HepG2 (cell line): ENCODE measurements at regions of chrX and their contacts with region 1.

Region 1: DNA sequence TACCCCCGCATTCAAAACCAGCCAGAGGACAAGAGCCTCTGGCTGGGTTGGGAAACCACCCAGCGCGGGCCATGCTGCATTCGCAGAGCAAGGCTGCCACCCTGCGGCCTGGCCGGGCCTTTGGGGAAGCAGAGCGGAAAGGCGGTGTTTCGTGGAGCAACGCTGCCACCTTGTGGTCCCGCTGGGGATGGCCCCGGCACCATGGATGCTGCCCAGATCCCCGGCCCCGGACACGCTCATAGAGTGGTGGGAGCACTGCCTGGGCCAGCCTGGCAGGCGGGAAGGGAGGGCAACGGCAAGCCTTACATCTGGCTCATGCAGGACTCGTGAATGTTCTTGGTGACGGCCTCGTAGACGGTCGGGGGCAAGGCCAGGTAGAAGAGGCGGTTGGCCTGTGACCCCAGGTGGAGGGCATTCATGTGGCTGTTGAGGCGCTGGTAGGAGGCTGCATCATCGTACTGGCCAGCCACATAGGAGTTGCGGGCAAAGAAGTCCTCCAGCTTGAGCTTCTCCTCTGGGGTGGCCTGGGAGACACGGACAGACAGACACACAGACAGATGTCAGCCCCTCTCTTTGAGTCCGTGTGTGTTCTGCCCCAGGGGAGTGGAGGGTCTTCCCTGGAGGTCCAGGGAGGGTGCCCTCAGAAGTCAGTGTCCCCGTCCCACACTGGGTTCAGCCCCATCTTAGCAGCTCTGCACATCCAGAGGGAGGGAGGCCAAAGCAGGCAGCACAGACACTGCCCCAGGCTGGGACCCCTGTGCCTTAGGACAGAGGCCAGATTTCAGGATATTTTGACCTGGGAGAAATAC is 11.6 kb downstream of the G6PD start:
- DNase-seq: peak; percentile 56
- ATAC-seq: peak; percentile 83
- H3K4me3 ChIP-seq: no peak overlapping the region
- H3K27ac ChIP-seq: no peak overlapping the region
- H3K4me1 ChIP-seq: peaks cover 28% of the 10 kb centered on the region
- H3K27me3 ChIP-seq: no peaks in the 10 kb centered on the region
- CTCF ChIP-seq: peak; percentile 99
- EP300 ChIP-seq: no peak
- POLR2A ChIP-seq: no peak
- RAD21 ChIP-seq: peak; percentile 99

Region 2: GRCh38 chrX:154370882-154371770 is 163.9 kb before region 1 on chrX:
- CTCF ChIA-PET with region 1: interaction called, 55 read pairs
- POLR2A ChIA-PET with region 1: interaction called, 3 read pairs
- in situ Hi-C with region 1: no loop called
- intact Hi-C with region 1: loop called (anchors 1 kb)
- DNase-seq: peak; percentile 85
- ATAC-seq: peak; percentile 57
- H3K4me3 ChIP-seq: peak overlapping the region; percentile 65 to 92 (median 80)
- H3K27ac ChIP-seq: peak overlapping the region; percentile 58
- H3K4me1 ChIP-seq: peaks cover 37% of the 10 kb centered on the region
- H3K27me3 ChIP-seq: no peaks in the 10 kb centered on the region
- CTCF ChIP-seq: peak; percentile 25; the same call in 1 of the 2 replicates
- EP300 ChIP-seq: no peak
- POLR2A ChIP-seq: peak in 1 of 2 experiments; percentile 89; a peak in 2 of 4 replicates
- RAD21 ChIP-seq: no peak

Region 3: GRCh38 chrX:154411322-154411980 is 123.6 kb before region 1 on chrX and contains the start of gene TAFAZZIN:
- CTCF ChIA-PET with region 1: no interaction called
- POLR2A ChIA-PET with region 1: interaction called, 3 read pairs
- in situ Hi-C with region 1: loop called (anchors 25 kb)
- intact Hi-C with region 1: no loop called
- DNase-seq: peak; percentile 21
- ATAC-seq: peak; percentile 58
- H3K4me3 ChIP-seq: peak within 1 kb of the TSS; percentile 57 to 73 (median 72)
- H3K27ac ChIP-seq: peak within 1 kb of the TSS; percentile 67
- H3K4me1 ChIP-seq: peaks cover 25% of the 10 kb centered on the region
- H3K27me3 ChIP-seq: no peaks in the 10 kb centered on the region
- CTCF ChIP-seq: no peak
- EP300 ChIP-seq: no peak
- POLR2A ChIP-seq: peak; percentile 33 to 78; a peak in 3 of 4 replicates
- RAD21 ChIP-seq: no peak
- total RNA-seq, gene TAFAZZIN: 6.3 and 16.8 TPM in 2 replicates

Region 4: DNA sequence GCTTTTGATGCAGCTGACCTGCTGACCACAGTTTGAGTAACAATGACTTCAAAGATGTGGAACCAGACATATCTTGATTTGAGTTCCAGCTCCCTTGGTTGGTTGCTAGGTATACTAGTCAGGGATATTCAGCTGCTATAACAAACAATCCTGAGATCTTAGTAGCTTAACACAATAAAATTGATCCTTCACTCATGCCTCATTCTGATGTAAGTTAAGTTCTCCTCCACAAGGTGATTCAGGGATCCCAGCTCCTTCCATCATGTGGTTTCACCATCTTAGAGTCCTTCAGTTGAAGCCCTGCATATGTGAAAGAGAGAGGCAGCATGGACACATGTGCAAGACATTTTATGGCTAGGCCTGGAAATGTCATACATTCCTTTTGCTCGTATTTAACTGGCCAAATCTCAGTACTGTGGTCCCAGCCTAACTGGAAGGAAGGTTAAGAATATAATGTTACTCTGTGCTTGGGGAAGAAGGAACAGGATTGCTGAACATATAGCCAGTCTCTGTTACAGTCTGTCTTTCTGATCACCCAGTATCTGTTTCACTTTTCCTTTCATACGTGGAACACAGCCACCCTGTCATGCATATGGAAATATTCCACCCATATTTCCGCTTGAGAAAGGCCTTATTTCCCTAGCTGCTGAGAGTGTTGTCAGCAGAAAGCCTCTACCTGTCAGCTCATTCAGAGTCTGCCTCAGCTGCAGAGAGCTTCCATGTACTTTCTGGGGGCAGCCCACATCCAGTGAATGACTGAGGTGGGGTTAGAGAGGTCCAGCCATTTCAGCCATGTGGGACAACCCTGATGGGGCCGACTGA is 292.3 kb after region 1 on chrX:
- CTCF ChIA-PET with region 1: no interaction called
- POLR2A ChIA-PET with region 1: no interaction called
- in situ Hi-C with region 1: no loop called
- intact Hi-C with region 1: no loop called
- DNase-seq: no peak
- ATAC-seq: no peak
- H3K4me3 ChIP-seq: no peak overlapping the region
- H3K27ac ChIP-seq: no peak overlapping the region
- H3K4me1 ChIP-seq: no peaks in the 10 kb centered on the region
- H3K27me3 ChIP-seq: no peaks in the 10 kb centered on the region
- CTCF ChIP-seq: no peak
- EP300 ChIP-seq: no peak
- POLR2A ChIP-seq: no peak
- RAD21 ChIP-seq: no peak